PC-3 (cell line): ENCODE measurements at regions of chr6 and their contacts with region 1.

Region 1: GRCh38 chr6:166627033-166627874 is at the start of gene RPS6KA2:
- DNase-seq: peak; percentile 94
- ATAC-seq: peak; percentile 83
- H3K4me3 ChIP-seq: peak within 1 kb of the TSS; percentile 87
- H3K27ac ChIP-seq: peak within 1 kb of the TSS; percentile 49
- H3K4me1 ChIP-seq: peaks cover 16% of the 10 kb centered on the region
- H3K27me3 ChIP-seq: no peaks in the 10 kb centered on the region
- CTCF ChIP-seq: no peak
- total RNA-seq, gene RPS6KA2: 5.1 and 7.9 TPM in 2 replicates

Region 2: DNA sequence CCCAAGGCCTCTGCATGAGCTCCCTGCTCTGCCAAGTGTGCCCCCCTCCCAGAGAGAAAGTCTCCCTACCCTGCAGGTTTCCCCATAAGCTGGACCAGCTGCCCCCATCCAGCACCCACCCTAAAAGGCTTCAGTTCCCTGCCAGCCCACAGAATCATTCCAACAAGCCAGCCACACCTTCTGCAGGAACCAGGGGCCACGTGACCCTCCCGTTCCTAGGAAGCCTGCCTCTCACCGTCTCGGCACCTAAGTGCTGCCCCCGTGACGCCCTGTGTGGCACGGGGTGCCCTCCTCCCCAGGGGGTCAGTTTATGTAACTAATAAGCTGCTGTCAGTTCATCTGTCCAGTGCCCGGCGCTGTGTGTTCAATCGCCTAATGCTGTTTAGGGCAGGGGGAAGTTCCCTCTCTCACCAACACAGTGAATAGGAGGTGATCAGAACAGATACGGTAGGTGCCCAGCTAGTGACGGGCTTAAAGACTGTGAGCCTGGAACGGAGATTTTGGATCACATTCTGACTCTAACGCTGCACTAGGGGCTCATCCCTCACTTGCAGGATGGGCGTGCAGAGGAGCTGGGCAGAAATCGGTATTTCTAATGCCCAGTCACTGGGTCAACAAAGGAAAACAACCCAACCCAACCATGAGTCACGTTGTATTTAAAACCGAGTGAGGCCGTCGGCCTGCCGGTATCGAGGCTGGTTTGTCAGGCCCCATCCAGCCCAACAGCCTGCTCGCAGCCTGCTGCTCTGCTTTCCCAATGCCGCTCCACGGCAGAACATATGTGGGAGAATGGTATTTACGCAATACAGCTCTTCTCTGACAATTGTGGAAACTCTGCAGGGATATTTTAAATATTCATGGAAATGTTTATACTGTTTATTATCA is 96.8 kb before region 1 on chr6:
- CTCF ChIA-PET with region 1: interaction called, 7 read pairs
- POLR2A ChIA-PET with region 1: interaction called, 13 read pairs
- intact Hi-C with region 1: loop called (anchors 5 kb)
- DNase-seq: peak; percentile 91
- ATAC-seq: peak; percentile 86
- H3K4me3 ChIP-seq: peak overlapping the region; percentile 59
- H3K27ac ChIP-seq: peak overlapping the region; percentile 100
- H3K4me1 ChIP-seq: peaks cover 39% of the 10 kb centered on the region
- H3K27me3 ChIP-seq: no peaks in the 10 kb centered on the region
- CTCF ChIP-seq: no peak

Region 3: GRCh38 chr6:166572370-166573261 is 54.6 kb before region 1 on chr6:
- CTCF ChIA-PET with region 1: no interaction called
- POLR2A ChIA-PET with region 1: interaction called, 28 read pairs
- intact Hi-C with region 1: loop called (anchors 2 kb)
- DNase-seq: peak; percentile 58
- ATAC-seq: peak; percentile 93
- H3K4me3 ChIP-seq: no peak overlapping the region
- H3K27ac ChIP-seq: peak overlapping the region; percentile 51
- H3K4me1 ChIP-seq: peaks cover 15% of the 10 kb centered on the region
- H3K27me3 ChIP-seq: no peaks in the 10 kb centered on the region
- CTCF ChIP-seq: no peak

Region 4: DNA sequence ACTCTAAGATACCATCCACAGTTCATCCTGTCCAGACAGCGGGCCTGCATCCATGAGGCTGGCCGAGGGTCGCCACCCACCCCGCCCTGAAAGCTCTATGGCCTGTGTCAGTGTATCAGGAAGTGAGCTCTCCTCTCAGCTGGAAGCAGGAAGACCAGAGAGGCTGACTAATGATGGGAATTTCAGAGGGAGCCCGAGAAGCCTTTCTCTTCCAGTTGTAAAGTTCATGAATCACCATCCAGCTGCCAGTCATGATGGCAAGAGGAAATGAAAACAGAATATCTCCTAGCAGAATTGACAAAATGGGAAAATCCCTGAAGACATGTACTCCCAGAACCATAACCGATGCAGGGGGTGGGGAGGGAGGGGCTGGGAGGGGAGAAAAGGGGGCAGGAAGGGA is 109.4 kb after region 1 on chr6:
- CTCF ChIA-PET with region 1: no interaction called
- POLR2A ChIA-PET with region 1: interaction called, 26 read pairs
- intact Hi-C with region 1: no loop called
- DNase-seq: peak; percentile 80
- ATAC-seq: peak; percentile 92
- H3K4me3 ChIP-seq: no peak overlapping the region
- H3K27ac ChIP-seq: peak overlapping the region; percentile 82
- H3K4me1 ChIP-seq: peaks cover 27% of the 10 kb centered on the region
- H3K27me3 ChIP-seq: no peaks in the 10 kb centered on the region
- CTCF ChIP-seq: no peak

Region 5: DNA sequence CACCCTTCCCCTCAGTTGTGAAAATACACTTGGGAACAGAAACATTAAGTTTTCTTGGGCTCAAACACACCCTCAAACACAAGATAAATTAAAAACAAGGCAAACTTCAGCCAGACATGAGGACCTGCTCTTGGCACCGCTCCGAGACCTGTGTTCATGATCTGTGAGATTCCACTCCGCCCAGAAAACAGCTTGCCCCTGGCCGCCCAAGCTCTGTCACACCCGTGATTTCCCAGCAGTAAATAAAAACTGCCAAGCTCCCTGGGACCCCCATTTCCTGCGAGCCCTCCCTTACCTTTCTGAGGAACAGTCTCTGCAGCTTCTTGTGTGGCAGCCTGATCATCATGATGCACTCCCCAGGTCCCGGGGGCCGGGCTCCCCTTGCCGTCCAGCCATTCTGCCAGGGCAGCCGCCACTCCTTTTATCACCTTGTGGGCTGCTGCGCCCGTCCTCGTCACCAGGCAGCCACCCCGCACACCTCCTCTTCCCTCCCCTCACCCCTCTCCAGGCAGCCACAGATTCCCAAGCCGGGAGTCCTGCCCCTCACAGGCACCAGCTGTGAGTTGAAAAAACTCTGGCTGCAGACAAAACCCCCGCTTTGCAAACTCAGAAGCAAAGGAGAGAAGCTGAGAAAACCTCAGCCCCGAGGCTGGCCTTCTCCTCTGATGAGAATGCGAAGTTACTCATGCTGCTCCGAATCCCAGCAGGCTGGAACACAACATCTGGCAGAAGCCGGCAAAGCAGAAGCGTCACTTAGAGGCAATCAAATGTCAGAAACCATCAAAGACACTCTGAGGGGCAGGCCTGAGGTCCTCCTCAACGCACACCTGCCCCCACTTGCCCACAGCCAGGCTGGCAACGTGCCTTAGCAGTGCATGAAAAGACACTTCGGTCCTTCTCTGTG is 130.2 kb after region 1 on chr6:
- CTCF ChIA-PET with region 1: no interaction called
- POLR2A ChIA-PET with region 1: no interaction called
- intact Hi-C with region 1: no loop called
- DNase-seq: no peak
- ATAC-seq: peak; percentile 27
- H3K4me3 ChIP-seq: peak overlapping the region; percentile 49
- H3K27ac ChIP-seq: no peak overlapping the region
- H3K4me1 ChIP-seq: no peaks in the 10 kb centered on the region
- H3K27me3 ChIP-seq: no peaks in the 10 kb centered on the region
- CTCF ChIP-seq: no peak

Region 6: DNA sequence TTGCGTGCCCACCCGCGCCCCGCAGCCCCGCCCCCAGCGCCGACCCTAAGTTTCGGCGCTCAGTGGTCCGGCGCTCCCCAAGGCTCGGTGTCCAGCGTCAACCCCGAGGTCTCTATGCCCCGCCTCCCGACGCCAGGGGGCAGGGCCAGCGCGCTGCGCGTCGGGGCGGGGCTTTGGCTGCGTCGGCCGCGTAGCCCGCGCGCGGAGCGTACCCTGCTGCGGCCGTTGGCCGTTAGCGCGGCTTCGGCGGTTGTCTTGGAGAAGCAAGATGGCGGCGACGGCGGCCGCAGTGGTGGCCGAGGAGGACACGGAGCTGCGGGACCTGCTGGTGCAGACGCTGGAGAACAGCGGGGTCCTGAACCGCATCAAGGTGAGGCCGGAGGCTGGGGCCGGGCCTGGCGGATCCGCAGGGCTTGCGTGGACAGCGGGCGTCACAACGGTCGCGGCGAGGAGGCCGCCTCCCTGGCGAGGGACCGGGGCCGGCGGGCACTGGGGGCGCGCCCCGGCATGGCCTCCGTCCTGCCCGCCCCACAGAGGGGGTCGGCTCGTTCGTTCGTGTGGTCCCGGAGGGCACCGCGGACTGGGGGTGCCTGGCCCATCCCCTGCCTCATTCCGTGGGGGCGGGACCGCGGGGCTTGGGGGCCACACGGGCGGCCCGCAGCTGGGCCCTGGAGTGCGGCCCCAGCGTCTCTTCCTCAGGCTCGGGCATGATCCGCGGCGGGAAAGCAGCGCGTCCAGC is 372.1 kb after region 1 on chr6 and contains the start of gene CEP43:
- CTCF ChIA-PET with region 1: no interaction called
- POLR2A ChIA-PET with region 1: no interaction called
- intact Hi-C with region 1: loop called (anchors 1 kb)
- DNase-seq: peak; percentile 91
- ATAC-seq: peak; percentile 96
- H3K4me3 ChIP-seq: peak within 1 kb of the TSS; percentile 93
- H3K27ac ChIP-seq: no peak within 1 kb of the TSS
- H3K4me1 ChIP-seq: peaks cover 7% of the 10 kb centered on the region; the same call in 1 of the 2 replicates
- H3K27me3 ChIP-seq: no peaks in the 10 kb centered on the region
- CTCF ChIP-seq: no peak
- total RNA-seq, gene CEP43: 11.8 and 15.2 TPM in 2 replicates